Endothelial cell of umbilical vein (primary cell): ENCODE measurements at regions of chr7 and their contacts with region 1.

Region 1: GRCh38 chr7:78020136-78020873 is 221.7 kb downstream of the PHTF2 start:
- DNase-seq: peak; percentile 80
- H3K4me3 ChIP-seq: peak overlapping the region in 2 of 3 experiments; percentile 33 to 41
- H3K27ac ChIP-seq: peak overlapping the region; percentile 28
- H3K4me1 ChIP-seq: peaks cover 11% of the 10 kb centered on the region
- H3K27me3 ChIP-seq: peaks cover 9 to 15% of the 10 kb centered on the region in 2 experiments
- CTCF ChIP-seq: peak; percentile 57 to 65
- POLR2A ChIP-seq: no peak

Region 2: GRCh38 chr7:77798394-77799077 is 221.8 kb before region 1 on chr7 and contains the starts of genes PHTF2 and TMEM60:
- CTCF ChIA-PET with region 1: no interaction called
- POLR2A ChIA-PET with region 1: no interaction called
- dilution Hi-C with region 1: no loop called
- intact Hi-C with region 1: loop called (anchors 1 kb)
- DNase-seq: peak; percentile 100
- H3K4me3 ChIP-seq: peak within 1 kb of the TSS; percentile 70 to 94 (median 90)
- H3K27ac ChIP-seq: peak within 1 kb of the TSS; percentile 66
- H3K4me1 ChIP-seq: peaks cover 31% of the 10 kb centered on the region
- H3K27me3 ChIP-seq: no peaks in the 10 kb centered on the region
- CTCF ChIP-seq: peak; percentile 41 to 73
- POLR2A ChIP-seq: peak; percentile 15
- total RNA-seq, gene PHTF2: 21.4 TPM in 2 replicates
- total RNA-seq, gene TMEM60: 15.0 and 15.8 TPM in 2 replicates

Region 3: DNA sequence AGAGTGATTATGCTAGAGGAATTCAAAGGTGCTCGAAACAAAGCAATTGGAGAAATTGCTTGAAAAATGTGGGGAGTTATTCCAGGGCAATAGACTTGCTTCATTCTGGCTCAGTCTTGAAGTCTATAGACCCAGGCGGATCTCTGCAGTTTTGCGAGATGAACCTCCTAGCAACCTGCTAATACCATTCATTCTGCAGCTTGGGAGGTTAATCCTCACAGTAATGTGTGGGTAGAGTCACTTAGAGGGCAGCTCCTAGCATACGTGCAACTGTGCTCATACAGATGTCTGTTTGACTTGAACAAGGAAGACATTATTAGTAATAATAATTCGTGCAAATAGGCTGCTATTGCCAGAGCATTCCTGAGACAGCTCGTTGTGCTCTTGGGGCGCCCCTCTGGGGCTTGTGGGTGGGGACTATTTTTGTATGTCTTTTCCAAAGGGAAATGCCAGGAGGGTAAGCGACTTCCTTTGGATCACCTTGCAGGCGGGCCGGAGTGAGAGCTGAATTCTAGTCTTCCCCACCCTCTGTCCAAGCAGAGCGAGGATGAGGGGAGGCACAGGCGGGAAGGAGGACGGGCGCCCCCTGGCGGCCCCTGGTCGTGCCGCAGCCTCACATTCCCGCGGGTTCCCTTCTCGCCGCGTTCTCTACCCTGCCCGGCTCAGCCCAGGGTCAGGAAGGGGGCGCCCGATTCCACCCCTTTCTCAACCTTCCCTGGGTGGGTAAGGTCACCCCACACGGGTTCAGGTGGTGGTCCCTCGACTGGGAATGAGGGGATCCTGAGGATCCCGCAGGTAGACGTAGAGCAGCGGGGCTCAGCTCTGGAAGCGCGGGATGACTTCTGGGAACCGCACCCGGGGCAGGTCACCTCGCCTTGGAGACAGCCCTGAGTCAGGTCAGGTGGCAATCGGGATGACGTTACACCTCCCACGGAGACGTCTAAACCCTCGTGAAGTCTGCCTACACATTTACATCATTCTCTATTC is 19.8 kb after region 1 on chr7:
- CTCF ChIA-PET with region 1: interaction called, 112 read pairs
- POLR2A ChIA-PET with region 1: no interaction called
- dilution Hi-C with region 1: no loop called
- intact Hi-C with region 1: loop called (anchors 1 kb)
- DNase-seq: peak; percentile 6
- H3K4me3 ChIP-seq: no peak overlapping the region
- H3K27ac ChIP-seq: no peak overlapping the region
- H3K4me1 ChIP-seq: no peaks in the 10 kb centered on the region
- H3K27me3 ChIP-seq: peaks cover 2 to 11% of the 10 kb centered on the region in 2 experiments
- CTCF ChIP-seq: peak; percentile 72 to 78
- POLR2A ChIP-seq: no peak

Region 4: GRCh38 chr7:78924581-78924980 is 904.3 kb after region 1 on chr7:
- CTCF ChIA-PET with region 1: interaction called, 6 read pairs
- POLR2A ChIA-PET with region 1: no interaction called
- dilution Hi-C with region 1: no loop called
- intact Hi-C with region 1: loop called (anchors 5 kb)
- DNase-seq: no peak
- H3K4me3 ChIP-seq: no peak overlapping the region
- H3K27ac ChIP-seq: no peak overlapping the region
- H3K4me1 ChIP-seq: no peaks in the 10 kb centered on the region
- H3K27me3 ChIP-seq: no peaks in the 10 kb centered on the region
- CTCF ChIP-seq: no peak
- POLR2A ChIP-seq: no peak

Region 5: DNA sequence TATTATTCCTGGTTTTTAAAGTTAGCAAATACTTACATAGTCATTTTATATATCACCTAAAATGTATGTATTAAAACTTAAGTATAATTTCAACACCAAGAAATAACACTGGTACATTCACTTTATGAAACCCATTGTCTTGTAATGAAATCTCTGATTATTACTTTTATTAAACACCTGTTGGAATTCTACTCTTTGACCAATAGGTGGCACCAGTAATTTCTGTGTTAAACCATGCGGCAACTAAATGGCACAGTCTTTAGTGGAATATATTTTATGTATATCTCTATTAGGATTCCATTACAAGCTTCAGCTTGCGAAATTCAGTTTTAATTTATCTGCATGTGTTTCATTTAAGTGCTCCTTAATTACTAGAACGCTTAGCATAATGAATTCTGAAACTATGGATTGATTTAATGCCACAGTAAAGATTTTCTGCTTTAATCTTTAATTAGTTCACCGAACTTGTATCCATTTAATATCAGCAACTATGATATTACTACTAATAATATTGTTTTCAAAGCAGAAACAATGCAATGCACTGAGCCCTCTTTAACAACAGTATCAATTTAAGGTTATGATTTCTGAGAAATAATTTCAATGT is 1251.9 kb after region 1 on chr7:
- CTCF ChIA-PET with region 1: interaction called, 4 read pairs
- POLR2A ChIA-PET with region 1: no interaction called
- dilution Hi-C with region 1: no loop called
- intact Hi-C with region 1: loop called (anchors 10 kb)
- DNase-seq: peak; percentile 55
- H3K4me3 ChIP-seq: no peak overlapping the region
- H3K27ac ChIP-seq: no peak overlapping the region
- H3K4me1 ChIP-seq: peaks cover 7% of the 10 kb centered on the region
- H3K27me3 ChIP-seq: no peaks in the 10 kb centered on the region
- CTCF ChIP-seq: peak; percentile 41 to 45
- POLR2A ChIP-seq: no peak